CD4-positive, alpha-beta memory T cell (primary cell): ENCODE measurements at regions of chr16 and their contacts with region 1.

Region 1: GRCh38 chr16:11742539-11743307 is at the start of gene TXNDC11:
- DNase-seq: peak; percentile 98 to 100 (median 99)
- H3K4me3 ChIP-seq: peak within 1 kb of the TSS; percentile 57 to 91
- H3K4me3 Mint-ChIP-seq: peak within 1 kb of the TSS; percentile 94 to 98 (median 95)
- H3K27ac ChIP-seq: peak within 1 kb of the TSS; percentile 88
- H3K27ac Mint-ChIP-seq: peak within 1 kb of the TSS; percentile 96 to 99 (median 98)
- H3K4me1 ChIP-seq: peaks cover 53% of the 10 kb centered on the region
- H3K4me1 Mint-ChIP-seq: peaks cover 39 to 60% (median 48%) of the 10 kb centered on the region in 4 donors
- H3K27me3 ChIP-seq: no peaks in the 10 kb centered on the region
- H3K27me3 Mint-ChIP-seq: no peaks in the 10 kb centered on the region
- total RNA-seq, gene TXNDC11: 51.7 to 59.8 TPM

Region 2: DNA sequence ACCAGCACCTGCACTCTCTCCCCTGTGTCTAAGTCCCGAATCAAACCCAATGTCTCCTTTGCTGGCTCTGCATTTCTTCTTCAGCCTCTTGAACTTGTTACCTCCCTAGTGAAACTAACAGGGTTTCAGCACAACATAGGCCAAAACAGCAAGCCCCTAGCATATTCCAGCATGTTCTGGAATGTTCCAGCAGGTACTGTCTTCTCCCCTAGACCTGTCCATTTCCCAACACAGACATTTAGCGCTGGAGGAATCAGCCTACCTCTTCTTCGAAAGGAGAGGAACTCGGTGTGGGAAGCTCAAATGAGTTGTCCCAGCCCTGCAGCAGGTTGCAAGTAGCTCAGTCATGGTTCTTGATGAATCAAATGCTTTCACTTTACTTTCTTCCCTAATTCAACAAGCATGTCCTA is 203.1 kb before region 1 on chr16:
- CTCF ChIA-PET with region 1: no interaction called
- POLR2A ChIA-PET with region 1: no interaction called
- intact Hi-C with region 1: no loop called
- DNase-seq: no peak
- H3K4me3 ChIP-seq: no peak overlapping the region
- H3K4me3 Mint-ChIP-seq: no peak overlapping the region
- H3K27ac ChIP-seq: no peak overlapping the region
- H3K27ac Mint-ChIP-seq: peak overlapping the region in 6 of 7 donors; percentile 2 to 53 (median 28)
- H3K4me1 ChIP-seq: no peaks in the 10 kb centered on the region
- H3K4me1 Mint-ChIP-seq: peaks cover 4 to 18% (median 12%) of the 10 kb centered on the region in 4 donors
- H3K27me3 ChIP-seq: no peaks in the 10 kb centered on the region
- H3K27me3 Mint-ChIP-seq: no peaks in the 10 kb centered on the region

Region 3: DNA sequence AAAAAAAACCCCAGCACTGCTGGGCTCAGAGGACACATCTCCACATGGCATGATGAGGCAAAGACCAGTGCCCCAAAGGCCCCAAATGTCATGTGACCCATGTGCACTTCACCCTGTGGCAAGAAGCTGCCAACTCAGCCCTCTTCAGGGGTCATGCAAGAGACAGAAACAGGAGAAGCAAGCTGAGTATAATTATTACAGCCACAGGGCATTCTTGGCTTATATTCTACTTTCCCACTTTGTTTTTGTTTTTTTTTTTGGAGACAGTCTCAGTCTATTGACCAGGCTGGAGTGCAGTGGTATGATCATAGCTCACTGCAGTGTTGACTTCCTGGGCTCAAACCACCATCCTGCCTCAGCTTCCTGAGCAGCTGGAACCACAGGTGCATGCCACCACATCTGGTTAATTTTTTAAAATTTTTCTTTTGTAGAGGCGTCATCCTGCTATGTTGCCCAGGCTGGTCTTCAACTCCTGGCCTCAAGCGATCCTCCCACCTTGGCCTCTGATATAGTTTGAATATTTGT is 123.3 kb before region 1 on chr16:
- CTCF ChIA-PET with region 1: no interaction called
- POLR2A ChIA-PET with region 1: interaction called, 13 read pairs
- intact Hi-C with region 1: no loop called
- DNase-seq: peak; percentile 42 to 60 (median 57)
- H3K4me3 ChIP-seq: peak overlapping the region in 1 of 2 donors; percentile 25
- H3K4me3 Mint-ChIP-seq: peak overlapping the region; percentile 20 to 83 (median 72)
- H3K27ac ChIP-seq: peak overlapping the region; percentile 29
- H3K27ac Mint-ChIP-seq: peak overlapping the region; percentile 75 to 97 (median 93)
- H3K4me1 ChIP-seq: peaks cover 73% of the 10 kb centered on the region
- H3K4me1 Mint-ChIP-seq: peaks cover 32 to 66% (median 51%) of the 10 kb centered on the region in 4 donors
- H3K27me3 ChIP-seq: no peaks in the 10 kb centered on the region
- H3K27me3 Mint-ChIP-seq: no peaks in the 10 kb centered on the region

Region 4: GRCh38 chr16:11636172-11636721 is 106.5 kb before region 1 on chr16:
- CTCF ChIA-PET with region 1: no interaction called
- POLR2A ChIA-PET with region 1: no interaction called
- intact Hi-C with region 1: no loop called
- DNase-seq: peak in 1 of 5 donors; percentile 8
- H3K4me3 ChIP-seq: no peak overlapping the region
- H3K4me3 Mint-ChIP-seq: no peak overlapping the region
- H3K27ac ChIP-seq: no peak overlapping the region
- H3K27ac Mint-ChIP-seq: no peak overlapping the region
- H3K4me1 ChIP-seq: peaks cover 10% of the 10 kb centered on the region
- H3K4me1 Mint-ChIP-seq: peaks cover 12 to 21% (median 18%) of the 10 kb centered on the region in 4 donors
- H3K27me3 ChIP-seq: no peaks in the 10 kb centered on the region
- H3K27me3 Mint-ChIP-seq: no peaks in the 10 kb centered on the region

Region 5: GRCh38 chr16:11667824-11668622 is 74.7 kb before region 1 on chr16 and contains the start of gene SNN:
- CTCF ChIA-PET with region 1: no interaction called
- POLR2A ChIA-PET with region 1: interaction called, 12 read pairs
- intact Hi-C with region 1: loop called (anchors 2 kb)
- DNase-seq: peak; percentile 81 to 85 (median 83)
- H3K4me3 ChIP-seq: peak within 1 kb of the TSS; percentile 47 to 72
- H3K4me3 Mint-ChIP-seq: peak within 1 kb of the TSS; percentile 84 to 92 (median 87)
- H3K27ac ChIP-seq: peak within 1 kb of the TSS; percentile 47
- H3K27ac Mint-ChIP-seq: peak within 1 kb of the TSS; percentile 65 to 95 (median 87)
- H3K4me1 ChIP-seq: peaks cover 74% of the 10 kb centered on the region
- H3K4me1 Mint-ChIP-seq: peaks cover 51 to 80% (median 60%) of the 10 kb centered on the region in 4 donors
- H3K27me3 ChIP-seq: no peaks in the 10 kb centered on the region
- H3K27me3 Mint-ChIP-seq: no peaks in the 10 kb centered on the region
- total RNA-seq, gene SNN: 19.2 to 20.4 TPM

Region 6: DNA sequence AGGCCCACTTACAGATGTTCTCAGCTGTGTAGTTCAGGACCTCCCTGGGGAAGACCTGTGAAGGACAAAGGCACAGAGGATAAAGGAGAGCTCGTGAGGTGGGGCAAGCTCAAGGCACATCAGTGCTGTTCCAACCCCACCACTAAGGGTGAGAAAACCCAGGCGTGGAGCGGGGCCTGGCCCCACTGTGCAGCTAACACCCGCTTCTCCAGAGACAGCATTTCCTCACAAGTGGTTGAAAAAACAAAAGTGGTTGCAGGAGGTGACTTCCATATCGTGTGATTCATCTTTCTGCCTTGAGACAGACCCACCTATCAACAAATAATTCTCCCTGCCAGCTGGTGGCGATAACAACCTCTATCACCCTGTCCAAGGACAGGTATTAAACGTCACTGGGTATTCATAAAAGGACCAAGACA is 44.4 kb before region 1 on chr16:
- CTCF ChIA-PET with region 1: no interaction called
- POLR2A ChIA-PET with region 1: no interaction called
- intact Hi-C with region 1: no loop called
- DNase-seq: peak in 1 of 5 donors; percentile 17
- H3K4me3 ChIP-seq: no peak overlapping the region
- H3K4me3 Mint-ChIP-seq: peak overlapping the region in 2 of 8 donors; percentile 8 to 46
- H3K27ac ChIP-seq: no peak overlapping the region
- H3K27ac Mint-ChIP-seq: peak overlapping the region in 6 of 7 donors; percentile 18 to 80 (median 71)
- H3K4me1 ChIP-seq: peaks cover 31% of the 10 kb centered on the region
- H3K4me1 Mint-ChIP-seq: peaks cover 34 to 61% (median 37%) of the 10 kb centered on the region in 4 donors
- H3K27me3 ChIP-seq: no peaks in the 10 kb centered on the region
- H3K27me3 Mint-ChIP-seq: no peaks in the 10 kb centered on the region

Region 7: DNA sequence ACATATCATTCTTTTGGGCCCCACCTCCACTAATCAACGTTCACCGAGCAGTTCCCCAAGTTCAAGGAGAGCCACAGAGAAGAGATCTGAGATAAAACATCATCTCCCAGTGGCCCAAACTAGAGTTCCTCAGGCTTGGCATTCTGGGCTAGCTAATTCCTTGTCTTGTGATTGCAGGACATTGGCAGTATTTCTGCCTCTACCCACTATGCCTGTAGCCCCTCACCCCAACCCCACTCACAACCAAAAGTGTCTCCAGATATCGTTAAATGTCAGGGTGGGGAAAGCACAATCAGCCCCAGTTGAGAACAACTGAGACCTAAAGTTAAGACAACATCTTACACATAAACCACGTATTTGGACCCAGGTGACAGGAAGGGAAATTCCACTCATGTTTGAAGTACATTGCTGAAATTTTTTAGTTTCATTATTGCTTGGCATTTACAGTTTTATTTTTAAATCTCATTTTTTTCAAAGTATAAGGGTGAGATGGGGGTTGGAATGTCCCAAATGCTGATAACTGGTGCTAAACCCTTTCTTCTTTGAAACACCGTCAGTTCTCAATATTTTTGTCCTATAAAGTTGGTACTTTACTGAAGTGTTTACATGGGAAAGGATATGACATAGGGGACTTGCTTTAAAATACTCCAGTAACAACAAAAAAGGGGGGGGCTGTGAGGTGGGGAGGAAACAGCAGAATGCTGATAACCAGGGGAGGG is 40.8 kb after region 1 on chr16:
- CTCF ChIA-PET with region 1: interaction called, 4 read pairs
- POLR2A ChIA-PET with region 1: interaction called, 21 read pairs
- intact Hi-C with region 1: loop called (anchors 2 kb)
- DNase-seq: peak; percentile 79 to 88 (median 84)
- H3K4me3 ChIP-seq: peak overlapping the region; percentile 58 to 87
- H3K4me3 Mint-ChIP-seq: peak overlapping the region; percentile 82 to 90 (median 86)
- H3K27ac ChIP-seq: peak overlapping the region; percentile 96
- H3K27ac Mint-ChIP-seq: peak overlapping the region; percentile 97 to 100 (median 98)
- H3K4me1 ChIP-seq: peaks cover 75% of the 10 kb centered on the region
- H3K4me1 Mint-ChIP-seq: peaks cover 42 to 66% (median 53%) of the 10 kb centered on the region in 4 donors
- H3K27me3 ChIP-seq: no peaks in the 10 kb centered on the region
- H3K27me3 Mint-ChIP-seq: no peaks in the 10 kb centered on the region

Region 8: DNA sequence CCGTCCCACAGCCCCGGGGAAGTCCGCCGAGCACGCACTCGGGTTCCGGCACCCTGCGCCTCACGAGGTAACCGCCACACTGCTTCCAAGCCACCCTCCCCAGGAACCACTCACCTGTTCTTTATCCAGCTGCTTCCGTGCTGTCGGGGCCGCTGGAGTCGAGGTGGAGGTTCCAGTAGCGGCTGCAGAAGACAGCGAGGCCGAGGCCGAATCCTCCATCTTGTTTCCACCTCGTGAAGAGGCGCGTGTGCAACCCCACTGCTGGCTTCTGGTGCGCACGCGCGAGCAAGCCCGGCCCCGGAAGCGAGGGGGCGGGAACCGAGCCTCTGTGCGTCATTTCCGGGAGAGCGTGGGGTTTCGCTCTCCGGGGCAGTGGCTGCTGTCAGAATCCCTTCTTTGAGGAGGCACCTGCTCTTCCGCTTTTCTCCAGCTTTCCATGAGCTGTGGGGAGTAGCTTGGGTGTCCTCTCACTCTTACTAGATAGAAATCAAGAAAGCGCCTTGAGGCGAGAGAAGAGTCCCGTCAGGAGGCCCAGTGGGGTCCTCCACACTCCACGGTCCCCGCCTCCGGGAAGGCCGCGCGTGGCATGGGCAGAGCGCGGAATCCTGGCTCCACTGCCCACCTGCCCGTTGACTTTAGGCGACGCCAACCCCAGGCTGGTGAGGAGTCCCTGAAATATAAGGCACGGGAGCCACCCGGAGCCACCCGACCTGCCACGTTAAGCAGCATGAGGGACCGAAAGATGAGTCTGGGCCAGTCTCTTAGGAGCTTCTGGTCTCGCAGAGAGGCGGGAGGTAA is 108.8 kb after region 1 on chr16 and contains the start of gene RSL1D1:
- CTCF ChIA-PET with region 1: no interaction called
- POLR2A ChIA-PET with region 1: interaction called, 18 read pairs
- intact Hi-C with region 1: loop called (anchors 1 kb)
- DNase-seq: peak; percentile 92 to 97 (median 95)
- H3K4me3 ChIP-seq: peak within 1 kb of the TSS; percentile 76 to 96
- H3K4me3 Mint-ChIP-seq: peak within 1 kb of the TSS; percentile 98 to 99 (median 99)
- H3K27ac ChIP-seq: peak within 1 kb of the TSS; percentile 94
- H3K27ac Mint-ChIP-seq: peak within 1 kb of the TSS; percentile 97 to 99 (median 98)
- H3K4me1 ChIP-seq: peaks cover 54% of the 10 kb centered on the region
- H3K4me1 Mint-ChIP-seq: peaks cover 27 to 77% (median 47%) of the 10 kb centered on the region in 4 donors
- H3K27me3 ChIP-seq: no peaks in the 10 kb centered on the region
- H3K27me3 Mint-ChIP-seq: no peaks in the 10 kb centered on the region
- total RNA-seq, gene RSL1D1: 180 to 206 TPM